ENCODE measurements at regions of chr6 and their contacts with region 1.

Region 1: DNA sequence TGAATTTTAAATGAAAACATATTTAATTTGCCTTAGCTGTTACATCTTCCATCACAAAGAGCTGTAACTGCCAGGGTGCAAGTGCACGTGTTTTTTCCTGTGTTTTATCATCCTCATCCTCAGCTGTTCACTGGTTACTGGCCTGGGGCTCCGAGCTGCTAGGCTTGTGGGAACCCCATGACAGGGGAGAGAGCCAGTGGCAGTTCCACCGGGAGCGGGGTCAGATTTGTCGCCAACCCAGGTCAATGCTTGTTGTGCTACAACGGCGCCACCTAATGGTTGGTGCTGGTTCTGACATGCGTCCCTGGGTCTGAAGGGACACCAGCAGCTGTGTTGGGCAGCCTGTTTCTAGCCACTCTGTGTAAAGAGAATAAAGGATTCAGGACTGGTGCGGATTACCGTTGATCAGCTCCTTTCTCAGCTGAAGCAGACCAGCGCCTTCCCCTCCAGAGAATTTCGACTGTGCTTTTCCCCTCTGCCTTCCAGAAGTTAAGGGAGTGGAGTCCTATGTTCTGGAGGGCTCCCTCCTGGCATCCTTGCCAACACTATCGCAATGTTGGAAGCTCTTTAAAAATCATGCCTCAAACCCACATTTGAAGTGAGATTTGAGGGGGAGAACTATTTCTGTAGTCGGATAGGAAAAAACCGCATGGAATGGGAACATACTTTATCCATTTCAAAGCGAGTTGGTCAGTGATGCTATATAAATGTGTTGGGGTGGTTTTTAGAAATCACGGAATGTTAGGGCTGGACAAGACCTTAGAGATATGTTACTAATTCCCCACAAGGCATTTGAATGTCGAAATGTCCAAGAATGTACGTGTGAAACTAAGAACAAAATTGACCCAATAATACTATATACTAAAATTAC is 32.1 kb downstream of the SUMO4 start:
- DNase-seq: peak; percentile 93
- ATAC-seq: peak; percentile 92

Region 2: DNA sequence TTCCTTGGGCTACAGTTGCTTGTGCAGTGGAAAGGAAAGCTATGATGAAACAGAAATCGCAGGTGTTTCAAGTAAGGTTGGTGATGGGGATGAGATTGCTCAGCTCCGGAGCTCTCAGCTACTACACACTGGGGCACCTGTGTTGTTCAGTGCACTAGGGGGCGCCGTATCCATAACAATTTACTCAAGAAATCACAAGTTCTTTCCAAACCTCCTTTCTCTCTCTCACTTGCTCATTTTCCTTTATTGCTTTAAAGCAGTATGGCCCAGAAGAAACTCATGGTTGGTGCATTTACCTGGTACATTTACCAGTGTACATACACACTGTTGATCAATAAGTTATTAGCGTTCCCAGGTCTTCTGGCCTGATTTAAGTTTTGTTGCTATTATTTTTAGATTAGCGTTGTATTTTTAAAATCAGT is 349.8 kb before region 1 on chr6:
- intact Hi-C with region 1: loop called (anchors 1 kb)
- DNase-seq: peak; percentile 82
- ATAC-seq: peak; percentile 54

Region 3: GRCh38 chr6:149235130-149235561 is 197.0 kb before region 1 on chr6:
- intact Hi-C with region 1: no loop called
- DNase-seq: no peak
- ATAC-seq: peak; percentile 57